ENCODE measurements at regions of chr20 and their contacts with region 1.

Region 1: DNA sequence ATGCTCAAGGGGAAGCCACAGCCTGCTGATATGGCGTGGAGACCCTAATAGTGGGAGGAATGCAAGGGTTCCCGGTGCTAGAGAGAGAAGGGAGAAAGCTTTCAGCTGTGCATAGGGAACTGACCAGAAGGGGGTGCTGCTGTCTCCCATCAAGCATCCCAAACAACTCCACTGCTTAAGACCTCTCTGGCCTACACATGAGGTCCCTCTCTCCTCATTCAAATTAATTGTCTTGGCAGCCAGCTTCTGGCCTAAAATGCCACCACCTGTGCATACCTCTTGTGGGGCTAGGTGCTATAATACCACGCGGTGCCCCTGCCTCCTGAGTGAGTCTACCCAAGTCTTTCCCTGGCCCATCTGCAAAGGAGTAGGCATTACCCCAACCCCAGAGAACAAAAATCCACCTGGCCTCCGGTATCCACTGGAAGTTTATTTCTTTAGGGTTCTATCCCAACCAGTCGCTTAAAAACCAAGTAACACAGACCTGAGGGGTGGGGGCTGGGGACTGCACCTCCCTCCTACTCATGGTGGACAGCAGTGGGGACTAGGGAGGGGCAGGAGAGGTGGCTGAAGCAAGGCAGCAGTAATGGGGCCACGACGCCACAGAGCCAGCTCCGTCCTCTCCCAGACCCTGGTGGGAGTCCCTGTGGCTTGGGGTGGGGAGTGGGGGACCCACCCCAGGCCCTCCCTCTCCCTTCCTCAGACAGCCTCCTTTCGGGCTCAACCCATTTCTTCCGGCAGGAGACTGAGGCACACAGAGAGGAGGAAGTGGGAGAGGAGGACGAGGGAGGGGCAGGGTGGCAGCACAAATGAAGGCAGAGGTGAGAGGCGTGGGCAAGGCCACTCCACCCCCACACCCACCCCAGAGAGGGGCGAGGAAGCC is 14.2 kb downstream of the ADISSP start:
- DNase-seq: peak in 1 of 2 experiments; percentile 84
- H3K4me3 ChIP-seq: no peak overlapping the region
- H3K27ac ChIP-seq: no peak overlapping the region
- H3K4me1 ChIP-seq: peaks cover 0 to 17% (median 4%) of the 10 kb centered on the region in 4 experiments; a peak in 5 of 7 replicates
- H3K27me3 ChIP-seq: peaks cover 4 to 22% (median 17%) of the 10 kb centered on the region in 4 experiments
- CTCF ChIP-seq: peak; percentile 78 to 97 (median 80)
- EP300 ChIP-seq: no peak
- POLR2A ChIP-seq: peak in 1 of 2 experiments; percentile 49; a peak in 2 of 3 replicates
- RAD21 ChIP-seq: peak; percentile 69 to 75

Region 2: GRCh38 chr20:3679749-3680700 is 73.3 kb before region 1 on chr20:
- CTCF ChIA-PET with region 1: interaction called, 35 read pairs
- POLR2A ChIA-PET with region 1: interaction called, 5 read pairs
- DNase-seq: no peak
- H3K4me3 ChIP-seq: no peak overlapping the region
- H3K27ac ChIP-seq: no peak overlapping the region
- H3K4me1 ChIP-seq: peaks cover 5 to 29% (median 17%) of the 10 kb centered on the region in 4 experiments
- H3K27me3 ChIP-seq: peaks cover 0 to 13% (median 5%) of the 10 kb centered on the region in 4 experiments; a peak in 5 of 7 replicates
- CTCF ChIP-seq: no peak
- EP300 ChIP-seq: no peak
- POLR2A ChIP-seq: no peak
- RAD21 ChIP-seq: no peak

Region 3: GRCh38 chr20:3696200-3696599 is 57.1 kb before region 1 on chr20:
- CTCF ChIA-PET with region 1: interaction called, 13 read pairs
- POLR2A ChIA-PET with region 1: no interaction called
- DNase-seq: no peak
- H3K4me3 ChIP-seq: no peak overlapping the region
- H3K27ac ChIP-seq: no peak overlapping the region
- H3K4me1 ChIP-seq: no peaks in the 10 kb centered on the region
- H3K27me3 ChIP-seq: no peaks in the 10 kb centered on the region
- CTCF ChIP-seq: peak in 2 of 3 experiments; percentile 61 to 68; a peak in 3 of 4 replicates
- EP300 ChIP-seq: no peak
- POLR2A ChIP-seq: no peak
- RAD21 ChIP-seq: peak; percentile 60 to 61

Region 4: DNA sequence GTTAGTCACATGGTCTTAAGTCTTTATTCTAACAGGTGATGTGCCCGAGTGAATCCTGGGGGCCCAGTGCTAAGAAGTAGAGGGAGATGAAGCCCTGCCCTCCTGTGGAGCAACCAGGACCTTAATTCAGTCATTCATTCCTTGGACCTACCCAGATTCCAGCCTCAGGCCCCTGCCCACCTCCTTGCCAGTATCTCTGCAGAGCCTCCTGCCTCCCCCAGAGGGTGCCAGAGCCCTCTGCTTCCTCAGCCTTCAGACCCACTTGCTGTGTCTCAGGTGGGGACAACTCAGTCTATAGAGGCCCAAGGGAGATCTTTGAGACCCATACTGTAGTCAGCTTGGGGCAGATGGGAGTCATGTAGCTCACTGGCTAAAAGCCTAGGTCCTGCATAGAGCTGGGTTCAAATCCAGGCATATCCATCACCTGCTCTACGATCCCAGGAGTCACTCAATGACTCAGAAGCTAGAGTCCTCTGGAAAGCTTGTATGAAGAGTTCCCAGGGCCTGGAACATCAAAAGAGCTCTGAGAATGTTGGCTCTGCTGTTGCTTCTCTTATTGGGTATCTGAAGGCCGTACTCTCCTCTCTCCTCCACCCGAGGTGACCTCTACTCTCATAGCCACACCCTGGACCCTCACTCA is 37.0 kb before region 1 on chr20:
- CTCF ChIA-PET with region 1: interaction called, 308 read pairs
- POLR2A ChIA-PET with region 1: interaction called, 4 read pairs
- DNase-seq: peak; percentile 25 to 72
- H3K4me3 ChIP-seq: no peak overlapping the region
- H3K27ac ChIP-seq: no peak overlapping the region
- H3K4me1 ChIP-seq: no peaks in the 10 kb centered on the region
- H3K27me3 ChIP-seq: no peaks in the 10 kb centered on the region
- CTCF ChIP-seq: peak; percentile 91 to 96 (median 96)
- EP300 ChIP-seq: no peak
- POLR2A ChIP-seq: no peak
- RAD21 ChIP-seq: peak; percentile 90 to 97

Region 5: GRCh38 chr20:3727401-3728021 is 25.8 kb before region 1 on chr20:
- CTCF ChIA-PET with region 1: interaction called, 221 read pairs
- POLR2A ChIA-PET with region 1: interaction called, 6 read pairs
- DNase-seq: no peak
- H3K4me3 ChIP-seq: no peak overlapping the region
- H3K27ac ChIP-seq: no peak overlapping the region
- H3K4me1 ChIP-seq: peaks cover 0 to 6% (median 2%) of the 10 kb centered on the region in 4 experiments; a peak in 3 of 7 replicates
- H3K27me3 ChIP-seq: peaks cover 1 to 18% (median 13%) of the 10 kb centered on the region in 4 experiments; a peak in 4 of 7 replicates
- CTCF ChIP-seq: no peak
- EP300 ChIP-seq: no peak
- POLR2A ChIP-seq: no peak
- RAD21 ChIP-seq: no peak

Region 6: DNA sequence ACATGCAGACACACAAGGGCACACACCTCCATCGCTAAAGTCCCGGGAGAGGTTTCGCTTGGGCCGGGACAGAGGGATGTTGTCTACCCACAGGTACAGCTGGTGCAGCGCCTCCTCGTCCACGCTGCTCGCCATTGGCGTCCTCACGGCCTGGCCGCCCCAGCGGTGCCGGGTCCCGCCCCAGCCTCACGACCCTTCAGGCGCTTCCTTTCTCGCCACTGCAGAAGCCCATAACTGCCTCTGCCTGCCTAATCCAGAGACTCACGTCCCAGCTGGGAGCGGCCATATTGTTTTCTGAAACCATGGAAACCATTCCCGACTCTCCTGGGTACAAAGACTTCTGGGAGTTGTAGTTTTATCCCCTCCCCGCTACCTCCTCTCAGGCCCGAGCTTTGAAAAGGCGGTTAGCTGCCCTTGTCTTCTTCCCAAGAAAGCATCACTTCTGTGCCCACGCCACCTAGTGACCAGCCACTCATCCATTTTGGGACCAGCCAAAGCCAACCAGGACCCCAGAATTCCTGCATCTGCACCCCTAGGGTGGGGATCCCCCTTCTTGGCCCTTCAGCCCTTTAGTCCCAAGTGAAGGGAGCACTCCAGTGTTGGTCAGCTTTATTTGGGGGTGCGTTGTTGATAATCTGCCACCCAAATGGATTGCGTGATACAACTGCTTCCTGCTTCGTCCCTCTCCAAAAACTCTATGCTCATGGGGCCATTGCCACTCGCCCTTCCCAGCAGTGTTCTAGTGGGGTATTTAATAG is 28.0 kb after region 1 on chr20 and contains the start of gene SPEF1:
- CTCF ChIA-PET with region 1: interaction called, 31 read pairs
- POLR2A ChIA-PET with region 1: interaction called, 17 read pairs
- DNase-seq: peak; percentile 81 to 84
- H3K4me3 ChIP-seq: peak within 1 kb of the TSS; percentile 6 to 53 (median 43); a peak in 7 of 8 replicates
- H3K27ac ChIP-seq: no peak within 1 kb of the TSS
- H3K4me1 ChIP-seq: peaks cover 0 to 23% (median 15%) of the 10 kb centered on the region in 4 experiments; a peak in 6 of 7 replicates
- H3K27me3 ChIP-seq: peaks cover 0 to 30% (median 26%) of the 10 kb centered on the region in 4 experiments; a peak in 6 of 7 replicates
- CTCF ChIP-seq: peak; percentile 41 to 71 (median 59); a peak in 3 of 4 replicates
- EP300 ChIP-seq: no peak
- POLR2A ChIP-seq: no peak
- RAD21 ChIP-seq: peak; percentile 38 to 39
- total RNA-seq, gene SPEF1: 0.65 and 0.71 TPM in 2 replicates

Region 7: DNA sequence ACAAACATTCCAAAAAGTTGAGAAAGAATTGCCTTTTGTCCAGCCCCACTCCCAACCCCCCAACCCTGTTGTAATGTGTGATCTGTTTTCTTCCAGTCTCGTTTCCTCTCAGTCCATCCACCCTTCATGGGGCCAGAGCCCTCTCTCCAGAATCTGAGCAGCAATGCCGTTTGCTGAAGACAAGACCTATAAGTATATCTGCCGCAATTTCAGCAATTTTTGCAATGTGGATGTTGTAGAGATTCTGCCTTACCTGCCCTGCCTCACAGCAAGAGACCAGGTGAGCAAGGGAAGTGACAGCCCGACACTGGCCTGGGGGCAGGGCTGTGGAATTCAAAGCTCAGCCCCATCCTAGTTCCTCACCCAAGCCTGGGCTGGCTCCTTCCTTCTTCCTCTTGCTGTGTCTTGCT is 101.1 kb after region 1 on chr20:
- CTCF ChIA-PET with region 1: interaction called, 12 read pairs
- POLR2A ChIA-PET with region 1: interaction called, 3 read pairs
- DNase-seq: no peak
- H3K4me3 ChIP-seq: no peak overlapping the region
- H3K27ac ChIP-seq: no peak overlapping the region
- H3K4me1 ChIP-seq: no peaks in the 10 kb centered on the region; a peak in 1 of 7 replicates
- H3K27me3 ChIP-seq: no peaks in the 10 kb centered on the region
- CTCF ChIP-seq: no peak
- EP300 ChIP-seq: no peak
- POLR2A ChIP-seq: no peak
- RAD21 ChIP-seq: no peak

Measured in H1 (cell line).